ENCODE measurements at regions of chr15 and their contacts with region 1.

Region 1: GRCh38 chr15:60362321-60363086 is 35.3 kb downstream of the ANXA2 start:
- DNase-seq: no peak
- H3K4me3 ChIP-seq: no peak overlapping the region
- H3K27ac ChIP-seq: peak overlapping the region; percentile 41 to 65 (median 58)
- H3K4me1 ChIP-seq: peaks cover 8 to 37% (median 25%) of the 10 kb centered on the region in 4 donors
- H3K27me3 ChIP-seq: no peaks in the 10 kb centered on the region
- CTCF ChIP-seq: no peak
- EP300 ChIP-seq: no peak
- POLR2A ChIP-seq: no peak

Region 2: DNA sequence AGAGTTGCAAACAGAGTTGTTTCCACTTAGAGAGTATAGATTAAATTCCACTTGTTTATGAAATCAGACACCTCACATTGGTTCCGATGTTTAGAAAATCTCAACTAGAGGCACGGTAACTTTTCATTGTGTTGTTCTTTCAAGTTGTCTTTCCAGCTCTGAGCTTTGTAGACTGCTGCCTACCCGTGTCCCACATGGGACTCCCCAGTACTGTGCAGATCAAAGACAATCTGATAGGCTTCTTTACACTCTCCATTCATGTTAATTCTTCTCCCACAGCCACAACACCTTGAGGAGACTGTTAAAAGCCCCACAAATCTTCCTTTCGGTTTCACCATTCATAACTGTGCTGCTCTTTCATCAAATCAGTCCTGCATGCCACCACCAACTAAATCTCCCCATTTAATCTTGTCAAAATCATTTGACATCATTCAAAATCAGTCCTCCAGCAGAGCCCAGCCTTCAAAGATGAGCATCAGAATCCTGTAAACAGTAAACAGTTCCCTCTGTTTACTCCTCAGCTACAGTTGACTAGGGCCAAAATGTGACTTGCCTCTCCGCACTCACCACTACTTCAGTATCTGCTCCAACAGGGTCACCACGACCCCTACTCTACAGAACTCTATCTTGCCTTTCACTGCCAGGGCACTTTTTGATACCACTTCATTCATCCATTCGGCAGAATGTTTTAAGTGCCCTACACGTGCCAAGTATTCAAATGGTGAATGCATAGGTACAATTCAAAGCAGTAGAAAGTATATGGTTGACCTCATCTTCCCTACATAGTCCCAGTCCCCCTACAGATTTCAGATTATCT is 27.0 kb after region 1 on chr15:
- in situ Hi-C with region 1: no loop called
- intact Hi-C with region 1: no loop called
- DNase-seq: no peak
- H3K4me3 ChIP-seq: peak overlapping the region in 1 of 4 donors; percentile 3
- H3K27ac ChIP-seq: peak overlapping the region; percentile 9 to 99 (median 98)
- H3K4me1 ChIP-seq: peaks cover 51 to 68% (median 59%) of the 10 kb centered on the region in 4 donors
- H3K27me3 ChIP-seq: no peaks in the 10 kb centered on the region
- CTCF ChIP-seq: no peak
- EP300 ChIP-seq: no peak
- POLR2A ChIP-seq: no peak

Region 3: DNA sequence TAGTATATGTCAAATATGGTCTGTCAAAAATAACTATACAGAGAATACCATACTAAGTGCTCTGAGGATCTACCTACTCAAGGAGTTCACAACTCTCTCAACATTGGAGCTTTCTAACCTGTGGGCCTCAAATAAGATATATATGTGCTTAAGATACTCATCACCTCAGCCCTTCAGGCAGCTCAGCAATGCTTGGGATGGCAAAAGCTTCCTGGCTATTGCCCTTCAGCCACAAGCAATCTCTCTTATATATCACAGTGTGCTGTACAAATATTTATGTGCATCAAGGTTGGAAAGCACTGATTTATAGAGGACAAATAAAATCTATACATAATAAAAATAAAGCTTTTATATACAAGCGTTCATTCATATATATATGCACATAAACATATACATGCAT is 76.1 kb after region 1 on chr15:
- in situ Hi-C with region 1: loop called in 3 of 4 experiments (anchors 5 to 10 kb)
- intact Hi-C with region 1: no loop called
- DNase-seq: no peak
- H3K4me3 ChIP-seq: no peak overlapping the region
- H3K27ac ChIP-seq: no peak overlapping the region
- H3K4me1 ChIP-seq: peaks cover 0 to 24% (median 9%) of the 10 kb centered on the region in 4 donors
- H3K27me3 ChIP-seq: no peaks in the 10 kb centered on the region
- CTCF ChIP-seq: no peak
- EP300 ChIP-seq: no peak
- POLR2A ChIP-seq: no peak

Region 4: GRCh38 chr15:60444289-60444912 is 81.9 kb after region 1 on chr15:
- in situ Hi-C with region 1: loop called in 3 of 4 experiments (anchors 5 to 10 kb)
- intact Hi-C with region 1: loop called (anchors 5 kb)
- DNase-seq: no peak
- H3K4me3 ChIP-seq: no peak overlapping the region
- H3K27ac ChIP-seq: no peak overlapping the region
- H3K4me1 ChIP-seq: peaks cover 0 to 28% (median 9%) of the 10 kb centered on the region in 4 donors
- H3K27me3 ChIP-seq: no peaks in the 10 kb centered on the region
- CTCF ChIP-seq: peak; percentile 40 to 57 (median 54)
- EP300 ChIP-seq: no peak
- POLR2A ChIP-seq: no peak

Region 5: GRCh38 chr15:61841466-61841865 is 1479.0 kb after region 1 on chr15:
- in situ Hi-C with region 1: no loop called
- intact Hi-C with region 1: loop called (anchors 10 kb)
- DNase-seq: no peak
- H3K4me3 ChIP-seq: no peak overlapping the region
- H3K27ac ChIP-seq: no peak overlapping the region
- H3K4me1 ChIP-seq: no peaks in the 10 kb centered on the region
- H3K27me3 ChIP-seq: peaks cover 4% of the 10 kb centered on the region
- CTCF ChIP-seq: no peak
- EP300 ChIP-seq: no peak
- POLR2A ChIP-seq: no peak